ENCODE measurements at regions of chr2 and their contacts with region 1.

Region 1: DNA sequence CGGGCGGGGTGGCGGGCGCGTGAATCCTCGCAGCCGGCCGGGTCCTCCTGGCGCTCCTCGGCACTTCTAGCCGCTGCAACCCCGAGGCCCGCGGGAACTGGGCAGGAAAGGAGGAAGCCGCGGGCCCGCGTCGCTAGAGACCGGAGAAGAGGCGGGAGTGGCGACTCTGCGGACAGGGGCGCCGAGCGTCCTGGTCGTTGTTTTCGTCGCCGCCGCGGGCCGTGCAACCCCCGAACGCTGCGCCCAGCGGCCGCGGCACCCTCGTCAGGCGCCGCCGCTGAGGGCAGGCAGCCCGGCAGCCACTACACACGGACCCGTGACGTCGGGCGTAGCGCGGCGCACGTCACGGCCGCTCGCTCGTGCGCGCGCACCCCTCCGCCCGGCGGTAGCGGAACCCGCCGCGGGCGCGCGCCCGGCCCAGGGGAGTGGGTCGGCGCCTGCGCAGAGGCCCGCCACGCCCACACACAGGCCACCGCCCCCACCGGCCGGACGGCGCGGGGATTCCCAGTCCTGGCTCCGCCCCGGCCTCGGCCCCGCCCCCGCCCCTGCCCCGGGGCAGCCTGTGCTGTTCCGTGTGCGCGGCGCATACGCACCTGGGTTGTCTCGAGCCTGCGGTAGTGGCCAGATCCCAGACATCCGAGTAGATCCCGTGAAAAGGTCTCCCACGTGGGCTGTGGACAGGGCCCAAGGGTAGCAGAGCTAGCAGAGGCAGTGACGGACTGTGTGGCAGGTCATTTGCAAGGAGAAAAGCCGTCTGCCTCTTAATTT is at the start of gene MAP3K2:
- DNase-seq: peak; percentile 86
- ATAC-seq: peak; percentile 83
- H3K4me3 ChIP-seq: peak within 1 kb of the TSS; percentile 87 to 95 (median 94)
- H3K27ac ChIP-seq: peak within 1 kb of the TSS; percentile 99
- H3K4me1 ChIP-seq: peaks cover 52% of the 10 kb centered on the region
- H3K27me3 ChIP-seq: no peaks in the 10 kb centered on the region; a peak in 1 of 5 replicates
- CTCF ChIP-seq: 0 out of 2 replicates have a peak, but pooled peaks have one; percentile 1
- EP300 ChIP-seq: no peak; a peak in 2 of 4 replicates
- POLR2A ChIP-seq: peak; percentile 91 to 93
- RAD21 ChIP-seq: peak; percentile 85
- total RNA-seq, gene MAP3K2: 37.2 and 56.1 TPM in 2 replicates

Region 2: DNA sequence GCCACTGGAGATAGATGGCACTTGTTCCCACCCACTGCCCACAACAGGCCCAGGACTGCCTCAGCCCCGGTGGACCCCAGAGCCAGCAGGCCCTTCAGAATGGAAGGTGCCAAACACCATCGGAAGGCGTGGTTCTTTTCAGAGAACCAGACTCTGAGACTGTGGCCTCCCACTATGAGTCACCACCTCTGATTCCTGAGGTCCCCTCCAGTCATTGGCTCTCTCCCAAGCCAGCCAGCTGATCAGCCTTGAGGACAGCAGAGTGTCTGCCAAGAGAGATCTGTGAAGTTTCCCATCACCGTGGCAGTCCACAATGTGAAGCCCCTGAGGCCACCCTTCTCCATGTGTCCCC is 10.4 kb after region 1 on chr2:
- CTCF ChIA-PET with region 1: no interaction called
- POLR2A ChIA-PET with region 1: interaction called, 18 read pairs
- in situ Hi-C with region 1: no loop called
- intact Hi-C with region 1: no loop called
- DNase-seq: peak; percentile 78
- ATAC-seq: peak; percentile 73
- H3K4me3 ChIP-seq: no peak overlapping the region
- H3K27ac ChIP-seq: no peak overlapping the region
- H3K4me1 ChIP-seq: peaks cover 41% of the 10 kb centered on the region
- H3K27me3 ChIP-seq: no peaks in the 10 kb centered on the region
- CTCF ChIP-seq: no peak
- EP300 ChIP-seq: no peak
- POLR2A ChIP-seq: no peak
- RAD21 ChIP-seq: no peak

Region 3: GRCh38 chr2:127408004-127408806 is 20.4 kb after region 1 on chr2:
- CTCF ChIA-PET with region 1: no interaction called
- POLR2A ChIA-PET with region 1: interaction called, 11 read pairs
- in situ Hi-C with region 1: no loop called
- intact Hi-C with region 1: loop called (anchors 2 kb)
- DNase-seq: peak; percentile 83
- ATAC-seq: peak; percentile 93
- H3K4me3 ChIP-seq: peak overlapping the region; percentile 71 to 89 (median 77)
- H3K27ac ChIP-seq: peak overlapping the region; percentile 82
- H3K4me1 ChIP-seq: peaks cover 63% of the 10 kb centered on the region
- H3K27me3 ChIP-seq: no peaks in the 10 kb centered on the region
- CTCF ChIP-seq: peak; percentile 46; the same call in 1 of the 2 replicates
- EP300 ChIP-seq: peak in 1 of 2 experiments; percentile 78; a peak in 2 of 4 replicates
- POLR2A ChIP-seq: peak; percentile 28 to 49; a peak in 2 of 4 replicates
- RAD21 ChIP-seq: peak; percentile 87

Region 4: DNA sequence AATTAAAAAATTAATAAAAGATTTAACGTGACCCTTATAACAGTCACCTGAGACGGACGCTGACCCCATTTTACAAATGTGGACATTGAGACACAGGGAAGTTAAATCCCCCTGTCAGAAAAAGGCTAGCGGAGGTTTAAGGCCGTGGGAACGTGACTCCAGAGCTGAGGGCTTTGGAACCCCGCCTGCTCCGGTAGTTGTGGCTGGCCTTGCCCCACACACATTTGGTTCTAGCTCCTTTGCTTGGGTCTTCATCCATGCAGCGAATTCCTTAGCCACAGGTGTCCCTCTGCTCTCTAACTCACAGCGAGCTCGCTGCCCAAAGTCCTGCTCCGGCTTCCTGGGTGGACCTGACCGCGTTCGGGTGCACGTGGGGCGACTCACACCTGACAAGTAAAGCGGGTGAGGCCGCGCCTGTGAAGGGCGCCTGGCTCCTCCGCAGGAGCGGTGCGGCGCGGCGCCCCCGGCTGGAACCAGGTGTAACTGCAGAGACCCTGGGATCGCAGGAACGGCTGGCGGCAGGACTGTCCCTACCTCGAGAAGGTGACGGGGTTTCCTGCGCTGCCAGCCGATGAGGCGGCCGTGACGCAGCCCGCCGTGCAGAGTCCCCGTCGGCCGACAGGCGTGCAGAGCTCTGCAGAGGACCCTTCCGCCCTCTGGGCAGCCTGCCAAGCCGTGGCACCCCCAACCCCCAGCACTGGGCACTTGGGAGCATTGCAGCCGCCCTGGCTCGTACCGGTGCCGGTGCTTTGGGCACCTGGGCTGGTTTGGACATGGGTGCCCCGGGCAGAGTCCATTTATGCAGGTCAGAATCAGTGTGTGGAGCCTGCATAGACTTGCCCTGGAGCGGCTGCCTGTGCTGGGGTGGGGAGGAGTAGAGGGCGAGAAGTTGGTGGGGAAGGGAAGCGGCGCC is 28.0 kb after region 1 on chr2:
- CTCF ChIA-PET with region 1: no interaction called
- POLR2A ChIA-PET with region 1: interaction called, 44 read pairs
- in situ Hi-C with region 1: no loop called
- intact Hi-C with region 1: no loop called
- DNase-seq: no peak
- ATAC-seq: no peak
- H3K4me3 ChIP-seq: no peak overlapping the region
- H3K27ac ChIP-seq: peak overlapping the region; percentile 96
- H3K4me1 ChIP-seq: peaks cover 100% of the 10 kb centered on the region
- H3K27me3 ChIP-seq: no peaks in the 10 kb centered on the region
- CTCF ChIP-seq: peak; percentile 65
- EP300 ChIP-seq: no peak
- POLR2A ChIP-seq: no peak
- RAD21 ChIP-seq: peak; percentile 62; the same call in 1 of the 2 replicates

Region 5: GRCh38 chr2:127422810-127423475 is 35.1 kb after region 1 on chr2:
- CTCF ChIA-PET with region 1: no interaction called
- POLR2A ChIA-PET with region 1: interaction called, 44 read pairs
- in situ Hi-C with region 1: no loop called
- intact Hi-C with region 1: no loop called
- DNase-seq: no peak
- ATAC-seq: no peak
- H3K4me3 ChIP-seq: no peak overlapping the region
- H3K27ac ChIP-seq: no peak overlapping the region
- H3K4me1 ChIP-seq: peaks cover 41% of the 10 kb centered on the region
- H3K27me3 ChIP-seq: no peaks in the 10 kb centered on the region
- CTCF ChIP-seq: no peak
- EP300 ChIP-seq: no peak
- POLR2A ChIP-seq: no peak
- RAD21 ChIP-seq: no peak